CD14-positive monocyte (primary cell): ENCODE measurements at regions of chr2 and their contacts with region 1.

Region 1: GRCh38 chr2:15636972-15637785 is 45.5 kb downstream of the DDX1 start:
- DNase-seq: peak; percentile 16 to 33 (median 26)
- H3K4me3 ChIP-seq: no peak overlapping the region
- H3K4me3 Mint-ChIP-seq: no peak overlapping the region
- H3K27ac ChIP-seq: no peak overlapping the region
- H3K27ac Mint-ChIP-seq: no peak overlapping the region
- H3K4me1 ChIP-seq: peaks cover 8 to 9% of the 10 kb centered on the region in 2 donors
- H3K4me1 Mint-ChIP-seq: peaks cover 9% of the 10 kb centered on the region
- H3K27me3 ChIP-seq: no peaks in the 10 kb centered on the region
- H3K27me3 Mint-ChIP-seq: peaks cover 0 to 3% (median 0%) of the 10 kb centered on the region in 3 donors
- CTCF ChIP-seq: peak; percentile 93

Region 2: GRCh38 chr2:15649556-15650255 is 12.5 kb after region 1 on chr2:
- intact Hi-C with region 1: no loop called
- DNase-seq: no peak
- H3K4me3 ChIP-seq: no peak overlapping the region
- H3K4me3 Mint-ChIP-seq: no peak overlapping the region
- H3K27ac ChIP-seq: no peak overlapping the region
- H3K27ac Mint-ChIP-seq: no peak overlapping the region
- H3K4me1 ChIP-seq: no peaks in the 10 kb centered on the region
- H3K4me1 Mint-ChIP-seq: no peaks in the 10 kb centered on the region
- H3K27me3 ChIP-seq: no peaks in the 10 kb centered on the region
- H3K27me3 Mint-ChIP-seq: peaks cover 0 to 5% (median 3%) of the 10 kb centered on the region in 3 donors
- CTCF ChIP-seq: no peak

Region 3: DNA sequence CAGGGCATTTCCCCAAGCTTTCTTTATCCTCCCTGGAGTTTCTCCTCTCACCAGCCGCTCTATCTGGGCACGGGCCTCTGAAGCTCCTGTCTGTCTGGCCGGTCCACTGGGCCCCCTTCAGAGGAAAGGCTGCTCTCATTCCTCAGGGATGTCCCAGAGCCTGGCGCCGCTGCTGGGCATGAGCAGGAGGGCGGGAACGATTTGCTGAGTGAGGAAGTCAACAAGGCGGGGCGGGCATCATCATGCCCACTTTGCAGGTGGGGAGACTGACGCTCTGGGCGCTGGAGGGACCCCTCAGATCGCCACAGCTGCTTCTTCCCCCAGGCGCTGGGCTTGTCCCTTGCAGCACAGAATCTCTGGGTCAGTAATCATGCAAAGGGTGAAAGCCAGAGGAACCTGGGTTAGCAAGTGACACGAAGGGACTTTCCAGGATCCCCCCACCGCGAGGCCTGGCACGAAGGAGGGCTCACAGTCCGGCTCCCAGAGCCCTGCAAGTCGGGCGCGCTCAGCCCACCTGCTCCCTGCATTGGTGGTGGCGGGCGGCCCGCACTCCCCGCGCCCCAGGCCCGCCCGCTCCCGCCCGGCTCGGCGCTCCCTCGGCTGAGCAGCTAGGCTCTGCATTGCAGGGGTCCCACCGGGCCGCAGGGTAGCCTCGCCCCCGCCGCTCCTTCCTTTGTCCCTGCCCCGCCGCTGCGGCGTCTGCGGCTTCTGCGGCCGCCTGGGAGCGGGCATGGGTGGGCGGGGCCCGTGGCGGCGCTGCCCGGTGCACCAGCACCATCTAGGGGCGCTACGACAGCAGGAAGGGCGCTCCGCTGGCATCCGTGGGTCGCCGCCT is 870.7 kb after region 1 on chr2:
- intact Hi-C with region 1: loop called (anchors 5 to 10 kb)
- DNase-seq: peak; percentile 1 to 41 (median 15)
- H3K4me3 ChIP-seq: no peak overlapping the region
- H3K4me3 Mint-ChIP-seq: peak overlapping the region in 1 of 2 donors; percentile 66
- H3K27ac ChIP-seq: no peak overlapping the region
- H3K27ac Mint-ChIP-seq: no peak overlapping the region
- H3K4me1 ChIP-seq: peaks cover 0 to 8% of the 10 kb centered on the region in 2 donors
- H3K4me1 Mint-ChIP-seq: peaks cover 4% of the 10 kb centered on the region
- H3K27me3 ChIP-seq: peaks cover 26 to 33% of the 10 kb centered on the region in 2 donors
- H3K27me3 Mint-ChIP-seq: peaks cover 31 to 35% (median 35%) of the 10 kb centered on the region in 3 donors
- CTCF ChIP-seq: peak; percentile 49